Aorta (tissue), 5 donors: ENCODE measurements at regions of chr7 and their contacts with region 1.

Region 1: DNA sequence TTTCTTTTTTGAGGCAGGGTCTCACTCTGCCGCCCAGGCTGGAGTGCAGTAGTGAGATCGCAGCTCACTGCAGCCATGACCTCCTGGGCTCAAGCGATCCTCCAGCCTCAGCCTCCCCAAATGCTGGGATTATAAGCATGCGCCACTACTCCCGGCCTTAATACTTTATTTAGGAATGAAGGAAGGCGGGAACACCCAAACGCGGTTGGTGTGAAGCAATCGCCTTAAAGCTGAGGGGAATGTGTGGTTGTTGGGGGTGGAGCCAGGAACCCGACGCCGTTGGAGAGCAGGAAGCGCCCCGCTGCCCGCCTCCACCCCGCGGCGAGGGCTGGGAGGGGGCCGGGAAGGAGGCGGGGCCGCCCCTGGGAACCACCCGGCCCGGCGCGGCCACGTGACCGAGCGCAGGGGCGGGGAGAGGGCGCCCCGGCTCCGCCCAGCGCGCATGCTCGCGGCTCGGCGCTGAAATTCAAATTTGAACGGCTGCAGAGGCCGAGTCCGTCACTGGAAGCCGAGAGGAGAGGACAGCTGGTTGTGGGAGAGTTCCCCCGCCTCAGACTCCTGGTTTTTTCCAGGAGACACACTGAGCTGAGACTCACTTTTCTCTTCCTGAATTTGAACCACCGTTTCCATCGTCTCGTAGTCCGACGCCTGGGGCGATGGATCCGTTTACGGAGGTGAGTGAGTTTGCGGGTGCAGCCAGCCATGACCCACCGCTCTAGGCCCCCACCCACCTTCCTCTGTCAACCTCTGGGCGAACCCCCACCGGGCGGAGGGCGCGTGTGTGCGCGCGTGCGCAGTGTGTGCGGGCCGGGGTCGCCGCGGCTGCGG is at the start of gene ANLN:
- DNase-seq: peak; percentile 97
- ATAC-seq: peak; percentile 100
- H3K4me3 ChIP-seq: peak within 1 kb of the TSS; percentile 49 to 53
- H3K27ac ChIP-seq: peak within 1 kb of the TSS in 1 of 2 donors; percentile 86
- H3K4me1 ChIP-seq: no peaks in the 10 kb centered on the region
- H3K27me3 ChIP-seq: no peaks in the 10 kb centered on the region
- total RNA-seq, gene ANLN: 1.9 to 3.8 TPM

Region 2: DNA sequence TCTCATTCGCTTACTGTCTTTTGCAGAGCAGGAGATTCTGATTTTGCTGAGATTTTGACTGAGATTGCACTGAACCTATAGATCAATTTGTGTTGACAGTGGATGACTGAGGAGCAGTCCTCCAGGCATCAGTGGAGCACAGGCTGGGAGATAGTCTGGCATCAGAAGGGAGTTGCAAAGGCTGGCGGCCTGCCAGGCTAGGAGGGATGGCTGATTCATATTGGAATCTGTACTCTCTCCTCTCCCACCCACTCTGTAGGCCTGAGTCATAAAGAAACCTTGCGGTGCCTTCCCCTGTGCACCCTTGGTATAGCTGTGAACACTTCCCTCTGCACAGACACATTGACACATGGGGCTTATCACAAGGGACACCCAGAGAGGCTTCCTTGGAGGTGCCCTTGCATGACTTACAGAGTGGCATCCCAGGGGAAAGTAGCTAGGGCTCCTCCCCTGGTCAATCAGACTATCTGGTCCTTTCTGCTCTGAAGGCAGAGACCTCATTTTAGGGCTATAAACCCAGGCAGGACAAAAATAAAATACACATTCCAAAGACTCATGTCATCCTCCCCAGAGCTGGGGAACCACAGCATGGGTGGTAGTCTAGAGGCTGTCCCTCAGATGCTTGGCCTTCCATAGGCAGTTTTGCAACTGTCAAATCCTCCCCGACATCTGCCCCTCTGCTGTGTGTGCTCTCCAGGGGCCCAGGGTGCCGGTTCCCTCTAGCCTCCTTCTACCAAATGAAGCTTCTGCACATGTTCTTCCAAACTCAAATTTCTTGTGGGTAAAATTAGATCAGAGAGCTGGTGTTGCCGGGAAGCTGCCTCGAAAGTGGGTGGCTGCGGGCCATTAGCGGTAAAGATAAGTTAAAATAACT is 273.9 kb before region 1 on chr7:
- intact Hi-C with region 1: no loop called
- DNase-seq: peak; percentile 91 to 96
- ATAC-seq: peak; percentile 61
- H3K4me3 ChIP-seq: no peak overlapping the region
- H3K27ac ChIP-seq: peak overlapping the region; percentile 61 to 100
- H3K4me1 ChIP-seq: peaks cover 5 to 9% of the 10 kb centered on the region in 2 donors
- H3K27me3 ChIP-seq: no peaks in the 10 kb centered on the region

Region 3: GRCh38 chr7:36366718-36367560 is 22.6 kb before region 1 on chr7:
- intact Hi-C with region 1: loop called in 1 of 2 experiments (anchors 2 kb)
- DNase-seq: peak; percentile 91 to 98
- ATAC-seq: peak; percentile 99
- H3K4me3 ChIP-seq: peak overlapping the region; percentile 91 to 94
- H3K27ac ChIP-seq: no peak overlapping the region
- H3K4me1 ChIP-seq: no peaks in the 10 kb centered on the region
- H3K27me3 ChIP-seq: no peaks in the 10 kb centered on the region

Region 4: GRCh38 chr7:36473454-36474282 is 84.1 kb after region 1 on chr7:
- intact Hi-C with region 1: no loop called
- DNase-seq: peak in 1 of 2 donors; percentile 53
- ATAC-seq: peak; percentile 38
- H3K4me3 ChIP-seq: no peak overlapping the region
- H3K27ac ChIP-seq: no peak overlapping the region
- H3K4me1 ChIP-seq: peaks cover 0 to 4% of the 10 kb centered on the region in 2 donors
- H3K27me3 ChIP-seq: no peaks in the 10 kb centered on the region